Right ventricle myocardium inferior (tissue), 1 donor: ENCODE measurements at regions of chr20 and their contacts with region 1.

Region 1: DNA sequence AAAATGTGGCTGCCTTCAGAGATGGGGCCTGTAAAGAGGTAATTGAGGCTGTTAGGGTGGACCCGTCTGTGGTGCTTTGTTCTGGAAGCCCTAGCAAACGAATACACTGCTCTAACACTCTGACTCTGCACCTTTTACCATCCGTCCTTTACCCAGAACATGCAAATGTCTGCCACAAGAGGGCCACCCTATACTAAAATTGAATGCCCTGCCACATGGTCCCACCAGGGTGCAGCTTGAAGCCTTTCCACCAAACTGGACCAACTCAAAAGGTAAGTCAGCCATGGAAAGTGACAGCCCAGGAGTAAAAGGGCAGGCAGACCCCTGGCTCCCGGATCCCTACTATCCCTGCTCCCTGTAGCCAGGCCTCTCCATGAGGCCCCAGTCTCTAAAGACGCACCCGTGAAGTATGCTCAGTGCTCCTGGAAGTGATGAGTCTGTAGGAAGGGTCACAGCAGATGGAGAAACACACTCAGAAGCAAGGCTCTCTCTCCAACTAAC is 5.8 kb upstream of the BFSP1 start:
- DNase-seq: no peak
- ATAC-seq: peak; percentile 98

Region 2: DNA sequence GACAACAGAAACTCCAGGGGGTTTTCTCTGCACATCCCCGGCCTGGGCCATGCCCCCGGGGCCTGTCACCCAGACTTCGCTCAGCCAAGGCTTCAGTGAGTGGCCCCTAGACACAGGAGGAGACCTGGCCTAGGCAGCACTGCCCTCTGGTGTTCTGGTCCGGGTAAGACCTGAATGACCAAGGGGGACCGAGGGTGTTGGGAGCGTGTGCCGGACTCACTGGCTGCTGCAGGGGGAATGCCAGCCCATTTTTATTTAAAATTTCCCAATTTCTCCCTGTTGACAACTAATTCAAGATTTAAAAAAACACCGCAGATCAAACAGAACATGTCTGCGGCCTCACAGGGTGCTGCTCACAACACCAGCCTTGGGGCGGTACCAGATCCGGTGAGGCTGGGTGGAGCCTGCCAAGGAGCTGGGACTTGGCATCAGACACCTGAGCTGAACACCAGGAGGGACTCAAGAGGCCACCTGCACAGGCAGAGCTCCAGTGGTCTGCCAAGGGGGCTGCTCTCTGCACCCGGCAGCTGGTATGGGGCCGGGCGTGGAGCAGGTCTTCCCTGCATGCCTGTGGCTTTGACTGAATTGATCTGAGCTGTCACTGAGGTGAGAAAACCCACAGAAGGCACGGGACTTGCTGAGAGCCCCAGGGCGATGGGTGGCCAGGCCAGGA is 80.7 kb after region 1 on chr20:
- intact Hi-C with region 1: loop called (anchors 1 kb)
- DNase-seq: no peak
- ATAC-seq: peak; percentile 62

Region 3: GRCh38 chr20:17995967-17996819 is 459.2 kb after region 1 on chr20:
- intact Hi-C with region 1: loop called (anchors 10 kb)
- DNase-seq: no peak
- ATAC-seq: peak; percentile 42

Region 4: GRCh38 chr20:18252597-18253451 is 715.8 kb after region 1 on chr20:
- intact Hi-C with region 1: no loop called
- DNase-seq: no peak
- ATAC-seq: no peak